Transverse colon (tissue), 4 donors: ENCODE measurements at regions of chr16 and their contacts with region 1.

Region 1: DNA sequence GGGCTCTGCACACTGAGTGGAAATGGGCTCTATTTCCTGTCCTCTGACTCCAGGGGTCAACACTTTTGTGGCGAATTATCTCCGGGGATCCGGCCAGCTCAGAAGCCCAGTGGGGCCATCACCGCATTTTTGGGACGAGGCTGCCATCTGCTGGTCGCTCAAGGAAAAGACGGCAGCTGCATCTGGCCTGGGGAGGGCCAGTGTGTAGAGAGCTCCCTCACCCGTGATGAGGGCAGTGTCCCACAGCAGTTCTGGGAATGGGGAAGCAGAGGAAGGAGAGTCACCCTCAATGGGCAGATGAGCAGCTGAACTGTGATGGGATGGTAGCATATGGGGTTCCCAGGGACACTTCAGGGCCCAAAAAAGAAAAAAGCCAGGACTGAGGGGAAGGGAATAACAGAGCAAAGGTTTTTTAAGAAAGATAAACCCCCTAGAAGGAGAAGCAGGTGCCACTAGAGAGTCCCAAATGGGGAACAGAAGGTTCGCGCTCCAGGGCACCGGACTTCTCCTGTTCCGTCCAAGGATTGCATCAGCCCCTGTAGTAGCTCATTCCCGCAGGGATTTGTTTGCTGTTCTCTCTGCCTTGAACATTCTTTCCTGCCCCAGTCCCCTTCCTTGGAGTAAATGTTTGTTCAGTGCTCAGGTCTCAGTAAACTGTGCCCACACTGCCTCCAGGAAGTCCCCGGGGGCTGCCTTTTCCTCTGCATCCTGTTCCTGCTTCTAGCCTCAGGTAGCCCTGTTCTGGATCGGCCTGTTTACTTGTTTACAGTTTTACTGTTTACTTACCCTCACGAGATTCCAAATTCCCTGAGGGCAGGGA is 9.3 kb upstream of the ABCC12 start:
- DNase-seq: peak; percentile 77
- H3K4me3 ChIP-seq: no peak overlapping the region
- H3K27ac ChIP-seq: no peak overlapping the region
- H3K4me1 ChIP-seq: peaks cover 0 to 11% (median 4%) of the 10 kb centered on the region in 4 donors
- H3K27me3 ChIP-seq: peaks cover 4% of the 10 kb centered on the region
- CTCF ChIP-seq: peak; percentile 71 to 80 (median 78)
- EP300 ChIP-seq: no peak
- POLR2A ChIP-seq: no peak

Region 2: GRCh38 chr16:46929378-46930332 is 1235.5 kb before region 1 on chr16:
- in situ Hi-C with region 1: loop called in 1 of 4 experiments (anchors 25 kb)
- intact Hi-C with region 1: no loop called
- DNase-seq: peak; percentile 73
- H3K4me3 ChIP-seq: no peak overlapping the region
- H3K27ac ChIP-seq: no peak overlapping the region
- H3K4me1 ChIP-seq: peaks cover 0 to 8% (median 2%) of the 10 kb centered on the region in 4 donors
- H3K27me3 ChIP-seq: no peaks in the 10 kb centered on the region
- CTCF ChIP-seq: peak; percentile 84 to 90 (median 89)
- EP300 ChIP-seq: no peak
- POLR2A ChIP-seq: no peak

Region 3: GRCh38 chr16:46947900-46948547 is 1217.1 kb before region 1 on chr16:
- in situ Hi-C with region 1: loop called in 2 of 4 experiments (anchors 10 to 25 kb)
- intact Hi-C with region 1: no loop called
- DNase-seq: no peak
- H3K4me3 ChIP-seq: no peak overlapping the region
- H3K27ac ChIP-seq: no peak overlapping the region
- H3K4me1 ChIP-seq: no peaks in the 10 kb centered on the region
- H3K27me3 ChIP-seq: no peaks in the 10 kb centered on the region
- CTCF ChIP-seq: peak; percentile 23 to 38 (median 33)
- EP300 ChIP-seq: no peak
- POLR2A ChIP-seq: no peak

Region 4: GRCh38 chr16:47037746-47038458 is 1127.2 kb before region 1 on chr16:
- in situ Hi-C with region 1: loop called in 3 of 4 experiments (anchors 10 to 25 kb)
- intact Hi-C with region 1: loop called (anchors 2 kb)
- DNase-seq: peak; percentile 92
- H3K4me3 ChIP-seq: peak overlapping the region; percentile 25 to 73 (median 52)
- H3K27ac ChIP-seq: peak overlapping the region; percentile 47 to 69 (median 60)
- H3K4me1 ChIP-seq: peaks cover 0 to 4% (median 2%) of the 10 kb centered on the region in 4 donors
- H3K27me3 ChIP-seq: peaks cover 7% of the 10 kb centered on the region
- CTCF ChIP-seq: peak; percentile 86 to 96 (median 95)
- EP300 ChIP-seq: no peak
- POLR2A ChIP-seq: no peak

Region 5: DNA sequence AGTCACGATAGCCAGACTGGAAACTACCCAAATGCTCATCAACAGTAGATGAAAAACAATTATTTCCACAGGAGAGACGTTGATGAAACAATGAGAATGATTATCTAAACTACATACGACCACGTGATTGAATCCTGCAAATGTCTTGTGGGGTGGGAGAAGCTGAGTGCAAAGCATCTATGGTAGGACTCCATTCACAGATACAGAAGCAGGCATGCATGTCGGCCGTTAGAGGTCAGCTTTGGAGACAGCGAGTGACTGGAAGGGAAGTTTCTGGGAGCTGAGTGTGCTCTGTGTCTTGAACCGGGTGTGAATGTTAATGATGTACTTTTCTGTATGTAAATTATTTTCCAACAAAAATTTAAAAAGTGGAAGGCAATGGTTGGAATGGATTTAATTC is 1120.1 kb before region 1 on chr16:
- in situ Hi-C with region 1: loop called in 3 of 4 experiments (anchors 10 to 25 kb)
- intact Hi-C with region 1: no loop called
- DNase-seq: no peak
- H3K4me3 ChIP-seq: no peak overlapping the region
- H3K27ac ChIP-seq: no peak overlapping the region
- H3K4me1 ChIP-seq: no peaks in the 10 kb centered on the region
- H3K27me3 ChIP-seq: no peaks in the 10 kb centered on the region
- CTCF ChIP-seq: no peak
- EP300 ChIP-seq: no peak
- POLR2A ChIP-seq: no peak

Region 6: GRCh38 chr16:47141773-47142485 is 1023.2 kb before region 1 on chr16:
- in situ Hi-C with region 1: loop called (anchors 25 kb)
- intact Hi-C with region 1: no loop called
- DNase-seq: peak; percentile 90
- H3K4me3 ChIP-seq: peak overlapping the region in 3 of 4 donors; percentile 60 to 82 (median 60)
- H3K27ac ChIP-seq: peak overlapping the region in 1 of 4 donors; percentile 81
- H3K4me1 ChIP-seq: peaks cover 3 to 25% (median 13%) of the 10 kb centered on the region in 4 donors
- H3K27me3 ChIP-seq: peaks cover 41% of the 10 kb centered on the region
- CTCF ChIP-seq: peak; percentile 81 to 85 (median 84)
- EP300 ChIP-seq: no peak
- POLR2A ChIP-seq: no peak

Region 7: DNA sequence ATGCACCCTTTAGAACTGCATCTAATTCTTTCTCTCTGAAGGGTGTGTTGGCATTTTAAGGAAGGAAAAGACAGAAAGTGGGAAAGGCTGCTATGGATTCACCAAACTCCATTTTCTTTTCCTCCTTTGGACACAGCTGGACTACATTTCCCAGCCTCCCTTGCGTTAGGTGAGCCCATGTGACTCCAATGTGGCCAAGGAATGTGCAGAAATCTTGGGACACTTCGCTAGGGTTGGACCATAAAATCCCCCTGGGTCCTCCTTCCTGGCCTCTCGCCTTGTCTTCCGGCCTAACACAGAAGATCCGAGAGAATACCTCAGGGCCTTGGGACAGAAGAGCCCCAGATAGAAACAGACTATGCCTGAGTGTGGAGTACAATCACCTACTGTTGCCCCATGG is 65.7 kb before region 1 on chr16:
- in situ Hi-C with region 1: no loop called
- intact Hi-C with region 1: no loop called
- DNase-seq: no peak
- H3K4me3 ChIP-seq: no peak overlapping the region
- H3K27ac ChIP-seq: no peak overlapping the region
- H3K4me1 ChIP-seq: no peaks in the 10 kb centered on the region
- H3K27me3 ChIP-seq: no peaks in the 10 kb centered on the region
- CTCF ChIP-seq: no peak
- EP300 ChIP-seq: no peak
- POLR2A ChIP-seq: no peak